Uterus (tissue), 4 donors: ENCODE measurements at regions of chr3 and their contacts with region 1.

Region 1: DNA sequence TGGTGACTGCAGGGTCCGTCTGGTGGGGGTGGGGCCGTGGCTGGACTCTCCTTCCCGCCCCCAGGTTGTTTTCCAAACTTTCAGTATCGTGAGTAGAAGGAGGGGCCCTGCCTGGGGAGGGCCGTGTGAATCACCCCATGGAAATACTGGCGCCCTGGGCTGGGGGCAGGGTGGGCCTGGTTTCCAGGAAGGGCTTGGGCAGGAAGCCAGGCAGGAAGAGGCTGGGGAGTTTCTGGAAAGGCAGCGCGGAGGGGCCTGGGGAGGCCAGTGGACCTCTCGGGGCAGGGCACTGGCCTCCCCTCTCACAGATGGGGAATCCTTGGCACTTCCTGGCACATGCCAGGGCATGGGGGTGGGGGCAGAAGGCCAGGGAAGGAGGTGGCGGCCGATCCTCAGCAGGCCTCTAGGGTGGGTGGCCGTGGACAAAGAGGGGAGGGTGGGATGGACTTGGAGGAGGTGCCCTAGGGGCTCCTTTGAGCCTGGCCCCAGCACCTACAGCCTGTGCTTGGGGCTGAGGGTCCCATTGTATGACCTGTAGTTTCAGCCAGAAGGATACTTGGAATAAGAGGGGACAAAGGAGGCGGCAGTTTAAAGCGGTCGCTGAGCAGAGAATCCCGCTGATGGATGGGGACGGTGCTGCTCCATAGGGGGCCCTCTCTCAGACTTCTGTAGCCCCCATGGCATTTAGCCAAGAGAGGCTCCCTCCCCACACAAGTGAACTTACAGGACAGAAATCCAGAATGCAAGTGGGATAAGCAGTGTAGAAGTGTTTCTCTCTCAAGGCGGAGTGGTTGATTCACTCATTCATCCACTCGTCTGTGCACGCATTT is 56.5 kb upstream of the GATA2 start:
- DNase-seq: peak; percentile 60 to 76
- H3K4me3 ChIP-seq: no peak overlapping the region
- H3K27ac ChIP-seq: peak overlapping the region; percentile 46 to 57
- H3K4me1 ChIP-seq: no peaks in the 10 kb centered on the region
- H3K27me3 ChIP-seq: no peaks in the 10 kb centered on the region
- CTCF ChIP-seq: no peak
- POLR2A ChIP-seq: no peak

Region 2: DNA sequence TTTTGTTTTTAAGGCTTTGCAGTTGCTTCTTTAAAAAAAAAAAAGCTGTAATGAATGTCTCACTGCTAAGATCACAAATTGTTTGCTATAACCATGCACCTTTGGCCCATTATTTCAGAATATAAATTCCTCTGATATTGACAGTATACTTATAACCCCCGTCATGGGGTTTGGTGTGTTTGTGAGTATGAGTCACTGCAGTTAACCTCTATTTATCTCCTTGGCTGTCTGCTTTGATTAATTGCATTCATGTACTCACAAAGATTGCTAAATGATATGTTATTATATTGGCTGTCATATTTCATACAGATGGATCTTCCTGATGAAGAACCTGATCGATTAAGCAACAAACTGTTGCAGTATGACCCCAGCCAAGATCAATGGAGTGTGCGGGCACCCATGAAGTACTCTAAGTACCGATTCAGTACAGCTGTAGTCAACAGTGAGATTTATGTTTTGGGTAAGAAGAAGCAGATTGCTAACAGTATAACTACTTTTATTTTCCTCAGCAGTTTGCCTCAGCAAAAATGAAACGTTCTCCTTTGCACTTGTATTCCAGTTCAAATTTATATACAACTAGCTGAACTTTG is 619.6 kb before region 1 on chr3:
- intact Hi-C with region 1: loop called (anchors 10 kb)
- DNase-seq: no peak
- H3K4me3 ChIP-seq: no peak overlapping the region
- H3K27ac ChIP-seq: no peak overlapping the region
- H3K4me1 ChIP-seq: no peaks in the 10 kb centered on the region
- H3K27me3 ChIP-seq: no peaks in the 10 kb centered on the region
- CTCF ChIP-seq: no peak
- POLR2A ChIP-seq: no peak

Region 3: GRCh38 chr3:128167973-128168674 is 381.4 kb before region 1 on chr3:
- intact Hi-C with region 1: no loop called
- DNase-seq: no peak
- H3K4me3 ChIP-seq: no peak overlapping the region
- H3K27ac ChIP-seq: no peak overlapping the region
- H3K4me1 ChIP-seq: no peaks in the 10 kb centered on the region
- H3K27me3 ChIP-seq: no peaks in the 10 kb centered on the region
- CTCF ChIP-seq: no peak
- POLR2A ChIP-seq: no peak